ENCODE measurements at regions of chr17 and their contacts with region 1.

Region 1: GRCh38 chr17:64459284-64459747 is 10.4 kb downstream of the MILR1 start:
- DNase-seq: no peak
- ATAC-seq: peak; percentile 43
- H3K4me3 ChIP-seq: no peak overlapping the region
- H3K27ac ChIP-seq: no peak overlapping the region
- H3K4me1 ChIP-seq: no peaks in the 10 kb centered on the region
- H3K27me3 ChIP-seq: no peaks in the 10 kb centered on the region
- CTCF ChIP-seq: no peak
- EP300 ChIP-seq: no peak
- POLR2A ChIP-seq: no peak
- RAD21 ChIP-seq: no peak

Region 2: DNA sequence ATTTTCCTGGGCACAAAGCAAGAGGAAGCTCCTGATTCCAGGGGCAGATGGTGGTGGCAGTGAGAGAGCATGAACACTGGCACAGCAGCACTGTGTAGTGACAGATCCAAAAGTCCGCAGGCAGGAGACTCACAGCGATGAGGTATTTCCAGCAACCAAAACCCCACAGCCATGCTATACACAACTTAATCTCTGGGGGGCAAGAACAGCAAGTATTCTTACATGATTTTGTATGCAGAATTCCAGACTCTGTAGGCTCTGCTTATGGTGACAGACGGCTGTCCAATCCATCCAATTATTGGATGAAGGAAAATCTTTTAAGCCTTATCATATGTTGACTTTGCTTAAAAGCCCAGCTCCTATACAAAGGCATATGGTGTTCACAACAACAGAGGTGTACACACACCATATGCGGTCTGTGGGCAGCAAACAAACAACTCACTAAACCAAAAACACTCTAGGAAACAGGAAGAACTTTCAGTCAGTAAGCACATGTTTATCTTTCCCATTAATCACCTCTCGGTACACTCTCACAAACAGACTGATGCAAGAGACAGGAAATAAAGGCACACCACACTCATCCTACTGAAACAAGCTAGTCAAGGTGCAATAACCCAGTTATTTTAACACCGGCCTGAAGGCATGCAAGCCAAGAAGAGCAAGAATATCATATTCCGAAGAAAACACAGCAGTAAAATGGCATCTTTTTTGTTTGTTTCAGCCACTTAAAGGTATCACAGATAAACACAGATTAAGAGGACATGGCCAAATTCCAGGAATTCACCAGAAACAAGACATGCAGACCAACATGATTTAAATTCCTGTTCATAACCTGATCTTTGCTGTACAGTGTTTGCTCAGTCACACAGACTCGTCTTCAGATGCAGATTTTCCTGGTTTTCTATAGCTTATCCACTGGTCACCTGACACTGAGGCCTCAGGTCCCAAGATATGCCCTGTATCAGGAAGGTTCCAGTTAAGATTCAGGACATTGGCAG is 377.2 kb before region 1 on chr17:
- CTCF ChIA-PET with region 1: no interaction called
- POLR2A ChIA-PET with region 1: no interaction called
- in situ Hi-C with region 1: no loop called
- intact Hi-C with region 1: no loop called
- DNase-seq: peak; percentile 33 to 64 (median 50)
- ATAC-seq: peak; percentile 85
- H3K4me3 ChIP-seq: no peak overlapping the region
- H3K27ac ChIP-seq: peak overlapping the region; percentile 77
- H3K4me1 ChIP-seq: peaks cover 26 to 48% of the 10 kb centered on the region in 2 experiments
- H3K27me3 ChIP-seq: no peaks in the 10 kb centered on the region
- CTCF ChIP-seq: 0 out of 6 replicates have a peak, but pooled peaks of 1 of the 3 experiments have one; percentile 13
- EP300 ChIP-seq: peak; percentile 98
- POLR2A ChIP-seq: peak; percentile 58; the same call in 1 of the 2 replicates
- RAD21 ChIP-seq: peak in 1 of 2 experiments; percentile 13; a peak in 3 of 4 replicates

Region 3: DNA sequence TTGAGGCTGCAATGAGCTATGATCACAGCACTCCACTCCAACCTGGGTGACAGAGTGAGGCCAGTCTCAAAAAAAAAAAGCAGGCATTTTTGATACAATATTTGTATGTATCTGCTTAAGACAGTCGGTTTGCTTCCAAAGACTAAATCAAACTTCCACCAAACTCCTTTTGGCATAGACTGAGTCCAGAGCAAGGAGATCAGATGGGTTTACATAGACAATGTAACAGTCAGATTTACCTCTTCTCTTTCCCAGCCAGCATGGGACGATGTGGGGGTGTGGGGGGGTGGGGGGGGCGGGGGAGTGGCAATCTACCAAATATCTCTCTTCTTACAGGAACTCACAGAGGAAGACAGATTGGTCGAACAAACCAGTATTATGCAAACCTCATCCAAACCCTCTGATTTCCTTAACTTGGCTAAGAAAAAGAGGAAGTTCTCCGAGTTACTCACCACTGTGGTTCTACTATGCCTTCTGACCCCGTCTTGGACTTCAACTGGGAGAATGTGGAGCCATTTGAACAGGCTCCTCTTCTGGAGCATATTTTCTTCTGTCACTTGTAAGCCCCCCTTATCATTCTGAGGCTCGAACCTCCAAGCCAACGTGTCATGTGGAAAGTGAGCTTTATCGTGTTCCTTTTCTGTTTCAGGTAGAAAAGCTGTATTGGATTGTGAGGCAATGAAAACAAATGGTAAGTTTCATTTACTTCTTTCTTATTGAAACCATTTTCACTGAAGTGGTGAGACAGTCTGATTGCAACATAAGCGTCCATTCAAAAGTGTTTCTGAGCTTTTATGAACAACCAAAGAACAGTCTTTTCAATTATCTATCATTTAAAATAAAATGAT is 10.4 kb before region 1 on chr17 and contains the start of gene MILR1:
- CTCF ChIA-PET with region 1: no interaction called
- POLR2A ChIA-PET with region 1: interaction called, 11 read pairs
- in situ Hi-C with region 1: no loop called
- intact Hi-C with region 1: no loop called
- DNase-seq: peak; percentile 27 to 86 (median 51)
- ATAC-seq: peak; percentile 97
- H3K4me3 ChIP-seq: peak within 1 kb of the TSS; percentile 14
- H3K27ac ChIP-seq: peak within 1 kb of the TSS; percentile 85
- H3K4me1 ChIP-seq: peaks cover 4 to 16% of the 10 kb centered on the region in 2 experiments; a peak in 4 of 5 replicates
- H3K27me3 ChIP-seq: no peaks in the 10 kb centered on the region
- CTCF ChIP-seq: no peak
- EP300 ChIP-seq: peak; percentile 77
- POLR2A ChIP-seq: peak; percentile 46; the same call in 1 of the 2 replicates
- RAD21 ChIP-seq: no peak
- polyA plus RNA-seq, gene MILR1: 4.6 to 7.1 TPM